Astrocyte of the cerebellum (primary cell): ENCODE measurements at regions of chr7 and their contacts with region 1.

Region 1: DNA sequence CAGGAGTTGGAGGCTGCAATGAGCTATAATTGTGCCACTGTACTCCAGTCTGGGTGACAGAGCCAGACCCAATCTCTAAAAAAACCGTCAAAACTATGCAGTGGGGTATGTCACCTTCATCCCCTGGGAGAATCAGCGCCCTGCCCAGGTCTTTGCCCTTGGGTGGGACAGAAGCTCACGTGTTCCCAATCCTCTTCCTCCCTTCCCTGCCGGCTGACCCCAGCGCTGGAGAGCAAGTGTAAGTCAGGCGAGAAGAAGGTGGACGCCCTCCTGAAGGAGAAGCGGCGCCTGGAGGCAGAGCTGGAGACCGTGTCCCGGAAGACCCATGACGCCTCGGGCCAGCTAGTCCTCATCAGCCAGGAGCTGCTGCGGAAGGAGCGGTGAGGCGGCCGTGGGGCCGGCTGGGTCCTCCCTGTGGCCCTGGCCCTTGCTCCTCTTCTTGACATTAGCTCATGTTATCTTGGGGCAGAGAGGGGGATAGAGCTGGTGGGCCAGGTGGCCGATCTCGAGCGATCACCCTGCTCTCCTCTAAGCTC is 64.8 kb upstream of the GTF2IRD1 start:
- DNase-seq: no peak
- H3K4me3 ChIP-seq: no peak overlapping the region
- CTCF ChIP-seq: no peak

Region 2: DNA sequence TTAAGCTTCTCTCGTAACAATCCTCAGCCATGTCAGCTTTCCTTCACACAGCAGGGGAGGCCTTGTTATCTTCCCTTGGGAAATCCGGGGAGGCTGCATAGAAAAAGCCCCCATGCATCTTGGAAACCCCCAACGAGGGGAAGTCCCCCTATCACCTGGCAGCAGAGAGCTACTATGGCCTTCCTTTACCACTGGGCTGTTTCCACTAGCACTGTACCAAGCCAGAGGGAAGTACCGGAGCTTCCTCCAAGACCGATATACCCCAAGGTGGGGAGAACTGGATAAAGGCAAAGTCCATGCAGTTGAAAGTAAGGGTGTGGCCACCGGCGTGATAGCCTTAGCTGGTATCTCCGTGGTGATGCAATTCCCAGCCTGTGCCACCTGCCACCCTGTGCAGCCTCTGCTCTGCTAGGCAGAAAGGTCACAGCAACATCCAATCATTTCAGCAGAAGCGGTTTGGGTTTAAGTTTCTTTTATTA is 104.1 kb before region 1 on chr7:
- in situ Hi-C with region 1: loop called (anchors 5 kb)
- DNase-seq: no peak
- H3K4me3 ChIP-seq: no peak overlapping the region
- CTCF ChIP-seq: no peak